ENCODE measurements at regions of chr5 and their contacts with region 1.

Region 1: DNA sequence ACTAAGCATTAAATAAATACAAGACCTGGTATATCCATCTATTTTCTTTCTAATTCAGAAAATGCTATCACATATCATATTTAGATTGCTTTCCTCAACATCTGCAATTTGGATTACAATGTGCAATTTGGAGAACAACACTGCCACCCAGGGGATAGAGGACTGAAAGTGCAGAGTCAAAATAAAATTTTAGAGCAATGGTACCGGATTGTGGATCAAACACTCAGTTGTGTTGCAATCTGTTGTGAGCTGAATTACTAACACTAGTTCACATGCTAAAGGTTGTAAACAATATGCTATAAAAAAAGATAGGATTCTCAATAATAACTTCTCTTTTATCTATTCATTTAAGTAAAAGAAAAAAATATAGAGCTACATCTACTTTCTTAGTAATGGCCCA is 11.9 kb upstream of the SRFBP1 start:
- DNase-seq: peak; percentile 60
- ATAC-seq: peak; percentile 89
- H3K4me3 ChIP-seq: no peak overlapping the region
- H3K27ac ChIP-seq: no peak overlapping the region
- H3K4me1 ChIP-seq: no peaks in the 10 kb centered on the region
- H3K27me3 ChIP-seq: no peaks in the 10 kb centered on the region
- CTCF ChIP-seq: peak; percentile 77
- POLR2A ChIP-seq: no peak
- RAD21 ChIP-seq: peak; percentile 86

Region 2: DNA sequence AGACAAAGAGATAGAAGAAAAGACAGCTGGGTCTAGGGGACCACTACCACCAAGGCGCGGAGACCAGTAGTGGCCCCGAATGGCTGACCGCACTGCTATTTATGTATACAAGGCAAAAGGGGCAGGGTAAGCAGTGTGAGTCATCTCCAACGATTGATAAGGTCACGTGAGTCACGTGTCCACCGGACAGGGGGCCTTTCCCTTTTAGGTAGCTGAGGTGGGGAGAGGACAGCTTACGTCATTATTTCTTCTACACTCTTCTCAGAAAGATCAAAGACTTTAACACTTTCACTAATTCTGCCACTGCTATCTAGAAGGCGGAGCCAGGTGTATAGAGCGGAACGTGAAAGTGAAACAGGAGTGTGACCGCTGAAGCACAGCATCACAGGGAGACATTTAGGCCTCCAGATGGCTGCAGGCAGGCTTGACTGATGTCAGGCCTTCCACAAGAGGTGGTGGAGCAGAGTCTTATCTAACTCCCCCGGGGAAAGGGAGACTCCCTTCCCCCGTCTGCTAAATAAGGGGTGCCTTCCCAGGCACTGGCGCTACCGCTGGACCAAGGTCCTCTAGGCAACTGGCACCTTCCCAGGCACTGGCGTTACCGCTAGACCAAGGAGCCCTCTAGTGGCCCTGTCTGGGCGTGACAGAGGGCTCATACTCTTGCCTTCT is 1491.9 kb before region 1 on chr5:
- CTCF ChIA-PET with region 1: no interaction called
- POLR2A ChIA-PET with region 1: no interaction called
- dilution Hi-C with region 1: no loop called
- in situ Hi-C with region 1: loop called (anchors 25 kb)
- intact Hi-C with region 1: no loop called
- DNase-seq: peak; percentile 29
- ATAC-seq: peak; percentile 34; the same call in 1 of the 2 replicates
- H3K4me3 ChIP-seq: no peak overlapping the region
- H3K27ac ChIP-seq: no peak overlapping the region
- H3K4me1 ChIP-seq: no peaks in the 10 kb centered on the region
- H3K27me3 ChIP-seq: no peaks in the 10 kb centered on the region
- CTCF ChIP-seq: peak; percentile 53
- POLR2A ChIP-seq: no peak
- RAD21 ChIP-seq: peak; percentile 68

Region 3: GRCh38 chr5:120817044-120817985 is 1132.6 kb before region 1 on chr5:
- CTCF ChIA-PET with region 1: interaction called, 8 read pairs
- POLR2A ChIA-PET with region 1: no interaction called
- dilution Hi-C with region 1: no loop called
- in situ Hi-C with region 1: no loop called
- intact Hi-C with region 1: loop called (anchors 5 kb)
- DNase-seq: peak; percentile 31
- ATAC-seq: peak; percentile 72
- H3K4me3 ChIP-seq: no peak overlapping the region
- H3K27ac ChIP-seq: no peak overlapping the region
- H3K4me1 ChIP-seq: no peaks in the 10 kb centered on the region
- H3K27me3 ChIP-seq: no peaks in the 10 kb centered on the region
- CTCF ChIP-seq: peak; percentile 49
- POLR2A ChIP-seq: no peak
- RAD21 ChIP-seq: peak; percentile 40; the same call in 1 of the 2 replicates

Region 4: GRCh38 chr5:121350181-121350930 is 599.5 kb before region 1 on chr5:
- CTCF ChIA-PET with region 1: no interaction called
- POLR2A ChIA-PET with region 1: no interaction called
- dilution Hi-C with region 1: no loop called
- in situ Hi-C with region 1: no loop called
- intact Hi-C with region 1: loop called (anchors 10 kb)
- DNase-seq: no peak
- ATAC-seq: no peak
- H3K4me3 ChIP-seq: no peak overlapping the region
- H3K27ac ChIP-seq: no peak overlapping the region
- H3K4me1 ChIP-seq: no peaks in the 10 kb centered on the region
- H3K27me3 ChIP-seq: no peaks in the 10 kb centered on the region
- CTCF ChIP-seq: no peak
- POLR2A ChIP-seq: no peak
- RAD21 ChIP-seq: no peak